ENCODE measurements at regions of chr16 and their contacts with region 1.

Region 1: GRCh38 chr16:85027349-85027957 is at the start of gene KIAA0513:
- DNase-seq: peak; percentile 90 to 99 (median 94)

Region 2: GRCh38 chr16:85010931-85011845 is 16.3 kb before region 1 on chr16 and contains the start of gene ZDHHC7:
- intact Hi-C with region 1: loop called (anchors 1 kb)
- DNase-seq: peak; percentile 75 to 98 (median 85)

Region 3: DNA sequence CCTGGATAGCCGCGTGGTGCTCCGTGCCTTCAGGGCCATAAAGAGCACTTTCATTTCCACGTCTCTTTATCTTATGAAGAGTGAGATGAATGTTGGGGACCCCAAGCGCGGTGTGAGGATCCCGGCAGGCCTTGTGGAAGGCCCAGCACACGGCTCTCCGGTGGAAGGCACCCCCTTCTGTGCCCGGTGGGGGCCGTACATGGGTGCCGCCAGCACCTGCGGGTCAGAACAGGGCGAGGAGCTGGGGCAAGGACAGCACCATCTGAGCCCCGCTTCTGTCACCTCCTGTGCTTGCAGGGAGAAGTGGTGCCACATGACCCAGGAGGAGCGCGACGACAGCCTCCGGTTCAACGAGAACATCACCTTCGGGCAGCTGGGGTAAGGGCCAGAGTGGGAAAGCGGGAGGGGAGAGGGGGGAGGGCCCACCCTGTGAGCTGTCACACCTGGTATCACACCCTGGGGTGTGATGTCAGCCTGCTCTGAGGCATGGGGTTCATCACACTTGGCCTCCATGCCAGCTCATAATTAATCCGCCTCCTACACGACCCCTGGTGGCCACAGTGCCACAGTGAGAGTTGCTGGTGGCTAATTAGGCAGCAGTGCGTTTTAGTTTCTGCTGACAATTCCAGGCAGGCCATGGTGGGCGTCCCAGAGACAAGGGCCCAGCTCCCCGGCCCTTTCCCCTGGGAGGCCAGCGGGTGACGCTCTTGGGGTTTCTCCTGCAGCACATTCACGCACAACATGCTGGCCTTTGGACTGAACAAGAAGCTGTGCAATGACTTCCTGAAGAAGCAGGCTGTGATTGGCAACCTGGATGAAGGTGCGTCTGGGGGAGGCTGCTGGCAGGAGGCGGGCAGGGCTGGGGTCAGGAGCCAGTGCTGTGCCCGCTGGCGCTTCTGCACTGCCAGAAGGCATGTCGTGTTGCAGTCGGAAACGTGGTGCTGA is 59.2 kb after region 1 on chr16:
- intact Hi-C with region 1: loop called (anchors 10 kb)
- DNase-seq: peak in 7 of 10 donors; percentile 33 to 68 (median 52)